ENCODE measurements at regions of chr2 and their contacts with region 1.

Region 1: DNA sequence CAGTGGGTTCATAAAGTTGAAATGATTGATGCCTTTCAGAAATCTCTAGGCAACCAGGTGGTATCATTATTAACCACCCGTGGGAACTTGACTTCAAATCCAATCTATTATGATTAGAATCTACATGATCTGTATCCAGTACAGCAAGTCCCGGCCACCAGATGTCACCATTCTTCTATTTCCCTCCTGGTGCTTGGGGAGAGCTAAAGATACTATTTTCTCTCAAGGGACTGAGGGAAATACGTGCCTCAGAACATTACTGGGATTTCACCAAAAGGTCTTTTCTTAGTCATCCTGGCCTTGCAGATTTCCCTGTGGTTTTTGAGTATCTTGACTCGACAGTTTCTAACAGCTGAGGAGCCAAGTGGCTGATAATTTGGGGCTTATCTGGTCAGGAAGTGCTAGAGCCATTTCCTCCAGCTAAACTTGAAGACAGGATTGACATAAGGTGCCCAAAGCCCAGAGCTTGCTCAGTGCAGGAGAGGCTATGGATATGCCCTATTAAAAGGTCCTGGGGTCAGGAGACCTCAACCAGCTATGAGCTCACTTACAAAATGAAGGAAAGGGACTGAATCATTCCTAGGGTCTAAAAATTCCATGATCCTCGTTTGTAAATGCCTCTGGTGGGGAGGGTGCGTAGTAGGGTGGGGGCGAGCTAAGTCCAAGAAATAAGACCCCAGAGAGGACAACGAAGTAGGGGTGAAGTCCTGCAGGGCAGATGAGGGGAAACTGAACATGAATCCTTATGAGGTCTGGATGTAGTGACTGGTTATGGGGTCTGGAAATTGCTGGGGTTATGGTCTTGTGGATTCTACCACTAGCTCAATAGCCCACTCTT is 135.4 kb upstream of the MGAT5 start:
- DNase-seq: peak; percentile 94
- ATAC-seq: peak; percentile 47
- H3K4me3 ChIP-seq: 0 out of 2 replicates have a peak overlapping the region, but pooled peaks have one; percentile 94
- H3K27ac ChIP-seq: no peak overlapping the region
- H3K4me1 ChIP-seq: peaks cover 12% of the 10 kb centered on the region
- H3K27me3 ChIP-seq: no peaks in the 10 kb centered on the region
- CTCF ChIP-seq: peak; percentile 91

Region 2: GRCh38 chr2:133886735-133887660 is 231.5 kb before region 1 on chr2:
- CTCF ChIA-PET with region 1: interaction called, 6 read pairs
- POLR2A ChIA-PET with region 1: no interaction called
- intact Hi-C with region 1: loop called (anchors 1 kb)
- DNase-seq: peak; percentile 91
- ATAC-seq: peak; percentile 83
- H3K4me3 ChIP-seq: peak overlapping the region; percentile 46; the same call in 1 of the 2 replicates
- H3K27ac ChIP-seq: no peak overlapping the region
- H3K4me1 ChIP-seq: peaks cover 17% of the 10 kb centered on the region
- H3K27me3 ChIP-seq: no peaks in the 10 kb centered on the region
- CTCF ChIP-seq: peak; percentile 85

Region 3: DNA sequence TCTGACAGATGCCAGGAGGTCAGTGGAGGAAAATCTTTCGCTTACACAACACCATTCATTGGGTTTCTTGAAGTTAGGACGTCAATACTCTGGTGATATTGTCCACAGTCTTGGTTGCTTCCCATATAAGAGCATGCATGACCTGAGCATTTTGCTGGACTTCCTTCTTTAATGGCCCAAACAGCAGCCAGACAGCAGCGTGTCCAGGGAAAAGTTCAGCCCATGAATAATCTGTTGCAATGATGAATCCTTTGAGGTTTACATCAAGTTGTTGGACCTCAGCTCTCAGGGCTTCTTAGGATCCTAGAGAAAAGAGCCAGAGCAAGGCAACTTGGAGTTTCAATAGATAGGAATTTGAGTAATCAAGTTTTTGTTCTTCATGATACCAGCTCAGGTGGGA is 20.2 kb before region 1 on chr2:
- CTCF ChIA-PET with region 1: no interaction called
- POLR2A ChIA-PET with region 1: no interaction called
- intact Hi-C with region 1: no loop called
- DNase-seq: no peak
- ATAC-seq: no peak
- H3K4me3 ChIP-seq: no peak overlapping the region
- H3K27ac ChIP-seq: no peak overlapping the region
- H3K4me1 ChIP-seq: peaks cover 6% of the 10 kb centered on the region; the same call in 1 of the 2 replicates
- H3K27me3 ChIP-seq: no peaks in the 10 kb centered on the region
- CTCF ChIP-seq: no peak

Region 4: GRCh38 chr2:134154246-134154645 is 35.7 kb after region 1 on chr2:
- CTCF ChIA-PET with region 1: no interaction called
- POLR2A ChIA-PET with region 1: no interaction called
- intact Hi-C with region 1: no loop called
- DNase-seq: no peak
- ATAC-seq: no peak
- H3K4me3 ChIP-seq: no peak overlapping the region
- H3K27ac ChIP-seq: no peak overlapping the region
- H3K4me1 ChIP-seq: no peaks in the 10 kb centered on the region
- H3K27me3 ChIP-seq: no peaks in the 10 kb centered on the region
- CTCF ChIP-seq: no peak

Region 5: DNA sequence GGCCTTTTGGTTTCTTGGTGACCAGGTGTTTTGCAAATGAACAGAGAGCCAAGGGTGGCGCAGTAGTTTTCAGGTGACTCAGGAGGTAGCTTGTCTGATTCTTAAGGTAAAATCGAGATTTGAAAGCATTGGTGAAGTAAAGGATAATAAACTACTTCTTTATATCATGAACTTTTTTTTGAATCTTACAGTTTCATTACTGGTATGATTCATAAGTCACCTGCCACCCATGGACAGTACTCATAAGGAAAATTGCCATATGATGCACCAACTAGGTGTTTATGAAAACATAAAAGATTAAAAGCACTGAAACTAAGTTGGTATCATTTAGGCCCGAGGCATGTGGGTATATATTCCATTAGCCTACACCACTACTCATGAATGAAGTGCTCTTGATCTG is 51.3 kb after region 1 on chr2:
- CTCF ChIA-PET with region 1: no interaction called
- POLR2A ChIA-PET with region 1: no interaction called
- intact Hi-C with region 1: no loop called
- DNase-seq: no peak
- ATAC-seq: no peak
- H3K4me3 ChIP-seq: no peak overlapping the region
- H3K27ac ChIP-seq: no peak overlapping the region
- H3K4me1 ChIP-seq: no peaks in the 10 kb centered on the region
- H3K27me3 ChIP-seq: no peaks in the 10 kb centered on the region
- CTCF ChIP-seq: no peak

Region 6: GRCh38 chr2:134207564-134208209 is 89.2 kb after region 1 on chr2:
- CTCF ChIA-PET with region 1: no interaction called
- POLR2A ChIA-PET with region 1: no interaction called
- intact Hi-C with region 1: loop called (anchors 5 kb)
- DNase-seq: peak; percentile 68
- ATAC-seq: peak; percentile 88
- H3K4me3 ChIP-seq: no peak overlapping the region
- H3K27ac ChIP-seq: no peak overlapping the region
- H3K4me1 ChIP-seq: peaks cover 6% of the 10 kb centered on the region
- H3K27me3 ChIP-seq: no peaks in the 10 kb centered on the region
- CTCF ChIP-seq: peak; percentile 88

Region 7: GRCh38 chr2:134245340-134245984 is 127.0 kb after region 1 on chr2:
- CTCF ChIA-PET with region 1: interaction called, 10 read pairs
- POLR2A ChIA-PET with region 1: no interaction called
- intact Hi-C with region 1: loop called (anchors 1 kb)
- DNase-seq: peak; percentile 84
- ATAC-seq: peak; percentile 71
- H3K4me3 ChIP-seq: no peak overlapping the region
- H3K27ac ChIP-seq: no peak overlapping the region
- H3K4me1 ChIP-seq: no peaks in the 10 kb centered on the region
- H3K27me3 ChIP-seq: no peaks in the 10 kb centered on the region
- CTCF ChIP-seq: peak; percentile 93

Region 8: GRCh38 chr2:134359367-134360081 is 241.0 kb after region 1 on chr2:
- CTCF ChIA-PET with region 1: no interaction called
- POLR2A ChIA-PET with region 1: no interaction called
- intact Hi-C with region 1: loop called (anchors 5 kb)
- DNase-seq: peak; percentile 84
- ATAC-seq: peak; percentile 82
- H3K4me3 ChIP-seq: no peak overlapping the region
- H3K27ac ChIP-seq: peak overlapping the region; percentile 55
- H3K4me1 ChIP-seq: peaks cover 33% of the 10 kb centered on the region
- H3K27me3 ChIP-seq: no peaks in the 10 kb centered on the region
- CTCF ChIP-seq: no peak

Region 9: DNA sequence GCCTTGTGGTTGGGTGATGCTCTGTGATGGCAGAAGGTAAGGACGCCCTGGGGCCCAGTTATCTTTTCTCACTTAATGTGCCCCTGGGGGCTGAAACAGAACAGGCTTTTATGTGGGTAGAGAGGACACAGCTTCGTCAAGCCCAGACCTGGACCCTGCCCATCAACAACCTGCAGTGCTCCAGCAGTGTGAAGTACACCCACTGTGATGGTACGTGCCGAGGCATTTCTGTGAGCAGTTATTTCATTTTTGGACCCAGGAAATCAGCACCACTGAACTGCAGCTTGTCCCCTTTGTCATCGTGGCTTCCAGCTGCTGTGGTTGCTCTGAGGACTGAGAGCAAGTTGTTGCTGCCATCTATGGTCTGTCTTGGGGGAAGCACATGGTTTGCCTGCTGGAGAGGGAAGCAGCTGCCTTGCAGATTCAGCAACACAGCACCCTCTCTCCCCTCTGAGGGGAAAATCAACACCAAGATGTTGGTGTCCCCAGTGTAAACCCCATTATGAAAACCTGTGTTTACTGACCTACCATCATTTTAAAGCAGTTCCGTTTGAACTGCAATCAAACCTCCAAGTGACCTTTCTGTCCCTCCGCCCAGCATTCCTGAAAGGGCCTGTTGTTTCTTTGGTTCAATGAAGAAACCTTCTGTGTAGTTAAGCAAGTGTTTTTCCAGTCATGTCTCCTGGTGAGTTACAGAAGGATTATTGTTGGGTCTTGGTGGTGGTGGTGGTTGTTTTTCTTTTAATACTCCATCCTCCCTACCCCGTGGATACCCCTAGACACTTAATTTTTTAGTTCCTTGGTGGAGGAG is 293.5 kb after region 1 on chr2:
- CTCF ChIA-PET with region 1: interaction called, 15 read pairs
- POLR2A ChIA-PET with region 1: no interaction called
- intact Hi-C with region 1: loop called (anchors 1 kb)
- DNase-seq: peak; percentile 77
- ATAC-seq: peak; percentile 59
- H3K4me3 ChIP-seq: no peak overlapping the region
- H3K27ac ChIP-seq: no peak overlapping the region
- H3K4me1 ChIP-seq: peaks cover 32% of the 10 kb centered on the region
- H3K27me3 ChIP-seq: no peaks in the 10 kb centered on the region
- CTCF ChIP-seq: peak; percentile 84

Region 10: DNA sequence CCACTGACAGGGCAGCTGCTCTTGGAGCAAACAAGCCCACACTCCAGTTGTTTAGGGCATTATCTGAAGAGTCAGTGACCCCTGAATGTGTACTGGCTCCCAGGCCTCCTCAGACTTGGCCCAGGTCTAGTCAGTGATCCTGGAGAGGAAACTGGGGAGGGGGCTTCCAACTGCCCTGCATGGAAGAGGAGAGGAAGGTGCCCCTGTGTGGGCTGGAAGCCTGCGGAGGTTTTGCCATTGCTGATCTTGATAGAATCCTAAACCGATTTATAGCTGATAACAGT is 332.8 kb after region 1 on chr2:
- CTCF ChIA-PET with region 1: interaction called, 11 read pairs
- POLR2A ChIA-PET with region 1: no interaction called
- intact Hi-C with region 1: loop called (anchors 1 kb)
- DNase-seq: no peak
- ATAC-seq: no peak
- H3K4me3 ChIP-seq: no peak overlapping the region
- H3K27ac ChIP-seq: no peak overlapping the region
- H3K4me1 ChIP-seq: peaks cover 7% of the 10 kb centered on the region
- H3K27me3 ChIP-seq: no peaks in the 10 kb centered on the region
- CTCF ChIP-seq: no peak

Region 11: GRCh38 chr2:134683561-134684112 is 565.1 kb after region 1 on chr2:
- CTCF ChIA-PET with region 1: no interaction called
- POLR2A ChIA-PET with region 1: no interaction called
- intact Hi-C with region 1: no loop called
- DNase-seq: peak; percentile 86
- ATAC-seq: peak; percentile 87
- H3K4me3 ChIP-seq: no peak overlapping the region
- H3K27ac ChIP-seq: peak overlapping the region; percentile 68
- H3K4me1 ChIP-seq: peaks cover 20% of the 10 kb centered on the region
- H3K27me3 ChIP-seq: no peaks in the 10 kb centered on the region
- CTCF ChIP-seq: no peak